A549 (cell line): ENCODE measurements at regions of chr1 and their contacts with region 1.

Region 1: GRCh38 chr1:167447521-167448136 is 70.7 kb downstream of the CD247 start:
- DNase-seq: peak; percentile 24 to 61
- ATAC-seq: peak; percentile 59 to 85
- H3K4me3 ChIP-seq: no peak overlapping the region
- H3K27ac ChIP-seq: peak overlapping the region; percentile 34 to 56; a peak in 5 of 6 replicates
- H3K4me1 ChIP-seq: peaks cover 14% of the 10 kb centered on the region
- CTCF ChIP-seq: no peak
- EP300 ChIP-seq: no peak
- POLR2A ChIP-seq: no peak
- RAD21 ChIP-seq: no peak

Region 2: DNA sequence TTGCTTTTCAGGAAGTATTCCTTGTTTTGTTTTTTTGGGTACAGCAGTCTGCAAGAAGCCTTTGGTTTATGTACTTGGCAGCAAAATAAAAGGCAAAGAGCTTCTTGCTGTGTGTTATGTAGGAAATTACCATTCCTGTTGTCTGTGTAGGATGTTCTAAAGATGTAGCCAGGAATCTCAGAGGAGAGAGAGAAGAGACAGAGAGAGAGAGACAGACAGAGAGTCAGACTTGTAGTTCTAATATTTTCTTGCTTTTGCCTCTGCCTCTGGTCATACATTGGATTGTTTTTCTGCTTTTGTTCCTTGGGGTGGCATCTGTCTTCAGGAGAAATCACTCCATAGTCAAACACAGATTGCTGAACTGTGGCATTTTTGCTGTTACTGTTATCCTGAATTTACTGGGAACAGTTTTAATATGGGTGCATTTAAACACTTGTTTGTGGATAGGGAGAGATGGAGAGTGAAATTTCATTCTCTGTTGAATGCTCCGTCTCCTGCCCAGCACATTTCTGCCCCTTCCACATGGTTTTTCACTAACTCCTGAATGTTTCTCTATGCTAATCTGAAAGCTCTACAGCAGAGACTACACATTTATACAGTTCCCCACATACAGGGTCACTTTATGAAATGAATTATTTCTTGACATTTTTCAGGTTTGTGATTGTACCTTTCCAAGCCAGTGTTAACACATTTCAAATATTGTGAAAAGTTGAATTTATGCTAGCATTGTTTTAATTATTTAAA is 177.1 kb before region 1 on chr1:
- CTCF ChIA-PET with region 1: interaction called, 72 read pairs
- POLR2A ChIA-PET with region 1: no interaction called
- DNase-seq: no peak
- ATAC-seq: 0 out of 6 replicates have a peak, but pooled peaks of 1 of the 2 experiments have one; percentile 30
- H3K4me3 ChIP-seq: no peak overlapping the region
- H3K27ac ChIP-seq: no peak overlapping the region
- H3K4me1 ChIP-seq: peaks cover 5% of the 10 kb centered on the region; the same call in 1 of the 3 replicates
- CTCF ChIP-seq: no peak
- EP300 ChIP-seq: no peak
- POLR2A ChIP-seq: no peak
- RAD21 ChIP-seq: no peak